CD8-positive, alpha-beta memory T cell (primary cell): ENCODE measurements at regions of chr14 and their contacts with region 1.

Region 1: DNA sequence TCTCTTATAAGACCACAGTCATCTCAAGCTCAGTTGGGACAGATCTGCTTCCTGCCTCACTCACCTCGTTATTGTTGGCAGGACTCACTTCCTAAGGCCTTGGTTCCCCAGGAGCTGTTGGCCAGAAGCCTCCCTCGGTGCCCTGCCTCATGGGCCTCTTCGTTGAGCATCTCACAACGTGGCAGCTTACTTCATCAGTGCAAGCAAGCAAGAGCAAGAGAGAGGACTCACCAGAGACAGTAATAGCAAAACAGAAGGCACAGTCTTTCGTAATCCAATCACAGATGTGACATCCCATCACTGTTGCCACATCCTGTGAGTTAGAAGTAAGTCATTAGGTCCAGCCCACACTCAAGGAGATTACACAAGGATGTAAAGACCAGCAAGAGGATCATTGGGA is 5.1 kb upstream of the NUMB start:
- DNase-seq: no peak
- H3K4me3 ChIP-seq: no peak overlapping the region
- H3K4me3 Mint-ChIP-seq: no peak overlapping the region
- H3K27ac ChIP-seq: no peak overlapping the region
- H3K27ac Mint-ChIP-seq: peak overlapping the region in 1 of 8 donors; percentile 25
- H3K4me1 ChIP-seq: peaks cover 3% of the 10 kb centered on the region
- H3K4me1 Mint-ChIP-seq: peaks cover 18 to 35% (median 31%) of the 10 kb centered on the region in 3 donors
- H3K27me3 ChIP-seq: no peaks in the 10 kb centered on the region
- H3K27me3 Mint-ChIP-seq: no peaks in the 10 kb centered on the region

Region 2: GRCh38 chr14:73173092-73173735 is 290.2 kb before region 1 on chr14:
- CTCF ChIA-PET with region 1: interaction called, 11 read pairs
- POLR2A ChIA-PET with region 1: no interaction called
- DNase-seq: peak in 2 of 5 donors; percentile 5
- H3K4me3 ChIP-seq: no peak overlapping the region
- H3K4me3 Mint-ChIP-seq: no peak overlapping the region
- H3K27ac ChIP-seq: no peak overlapping the region
- H3K27ac Mint-ChIP-seq: peak overlapping the region in 4 of 8 donors; percentile 4 to 49 (median 26)
- H3K4me1 ChIP-seq: no peaks in the 10 kb centered on the region
- H3K4me1 Mint-ChIP-seq: peaks cover 0 to 6% (median 3%) of the 10 kb centered on the region in 3 donors
- H3K27me3 ChIP-seq: no peaks in the 10 kb centered on the region
- H3K27me3 Mint-ChIP-seq: no peaks in the 10 kb centered on the region

Region 3: GRCh38 chr14:73283608-73284379 is 179.6 kb before region 1 on chr14:
- CTCF ChIA-PET with region 1: no interaction called
- POLR2A ChIA-PET with region 1: no interaction called
- DNase-seq: no peak
- H3K4me3 ChIP-seq: no peak overlapping the region
- H3K4me3 Mint-ChIP-seq: no peak overlapping the region
- H3K27ac ChIP-seq: no peak overlapping the region
- H3K27ac Mint-ChIP-seq: peak overlapping the region in 2 of 8 donors; percentile 51 to 52
- H3K4me1 ChIP-seq: no peaks in the 10 kb centered on the region
- H3K4me1 Mint-ChIP-seq: peaks cover 5 to 12% (median 7%) of the 10 kb centered on the region in 3 donors
- H3K27me3 ChIP-seq: no peaks in the 10 kb centered on the region
- H3K27me3 Mint-ChIP-seq: peaks cover 0 to 2% of the 10 kb centered on the region in 2 donors

Region 4: DNA sequence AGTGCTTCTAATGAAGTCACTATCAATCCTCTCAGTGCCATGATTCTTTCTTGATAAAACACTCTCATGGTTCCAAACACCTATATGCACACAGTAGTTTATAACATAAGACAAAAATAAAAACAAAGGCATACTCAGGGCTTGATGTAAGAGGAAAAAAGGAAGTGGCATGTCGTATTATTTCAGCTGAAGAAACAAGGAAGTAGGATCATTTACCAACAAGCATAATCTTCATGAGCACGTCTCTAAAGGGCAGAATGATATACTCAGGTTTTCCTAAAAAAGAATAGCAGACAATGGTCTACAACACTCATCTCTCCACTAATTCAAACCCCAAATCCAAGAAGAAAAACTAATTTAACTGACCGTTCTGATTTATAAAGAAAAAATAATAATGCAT is 39.0 kb before region 1 on chr14:
- CTCF ChIA-PET with region 1: no interaction called
- POLR2A ChIA-PET with region 1: interaction called, 16 read pairs
- DNase-seq: no peak
- H3K4me3 ChIP-seq: no peak overlapping the region
- H3K4me3 Mint-ChIP-seq: no peak overlapping the region
- H3K27ac ChIP-seq: no peak overlapping the region
- H3K27ac Mint-ChIP-seq: peak overlapping the region in 1 of 8 donors; percentile 42
- H3K4me1 ChIP-seq: no peaks in the 10 kb centered on the region
- H3K4me1 Mint-ChIP-seq: peaks cover 24 to 42% (median 38%) of the 10 kb centered on the region in 3 donors
- H3K27me3 ChIP-seq: no peaks in the 10 kb centered on the region
- H3K27me3 Mint-ChIP-seq: no peaks in the 10 kb centered on the region

Region 5: DNA sequence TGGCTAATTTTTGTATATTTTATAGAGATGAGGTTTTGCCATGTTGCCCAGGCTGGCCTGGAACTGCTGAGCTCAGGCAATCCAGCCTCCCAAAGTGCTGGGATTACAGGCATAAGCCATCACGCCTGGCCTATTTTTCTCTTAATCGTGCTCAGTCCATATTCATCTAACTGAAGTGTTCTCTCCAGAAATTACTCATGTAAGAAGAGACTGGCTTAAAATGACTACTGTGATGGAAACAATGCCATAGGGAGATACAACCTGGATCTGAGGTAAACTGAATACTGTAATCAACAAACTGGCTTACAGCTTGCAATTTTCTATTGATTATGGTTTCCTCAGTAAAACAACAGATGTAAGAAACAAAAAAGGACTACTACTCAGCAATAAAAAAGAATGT is 26.2 kb before region 1 on chr14:
- CTCF ChIA-PET with region 1: no interaction called
- POLR2A ChIA-PET with region 1: no interaction called
- DNase-seq: no peak
- H3K4me3 ChIP-seq: no peak overlapping the region
- H3K4me3 Mint-ChIP-seq: no peak overlapping the region
- H3K27ac ChIP-seq: no peak overlapping the region
- H3K27ac Mint-ChIP-seq: no peak overlapping the region
- H3K4me1 ChIP-seq: peaks cover 3% of the 10 kb centered on the region
- H3K4me1 Mint-ChIP-seq: peaks cover 27 to 37% (median 36%) of the 10 kb centered on the region in 3 donors
- H3K27me3 ChIP-seq: no peaks in the 10 kb centered on the region
- H3K27me3 Mint-ChIP-seq: no peaks in the 10 kb centered on the region